ENCODE measurements at regions of chr7 and their contacts with region 1.

Region 1: GRCh38 chr7:24572997-24573625 is at the start of gene PALS2:
- DNase-seq: peak; percentile 71 to 91 (median 82)
- ATAC-seq: peak; percentile 82
- H3K4me3 ChIP-seq: peak within 1 kb of the TSS; percentile 81 to 88
- H3K4me3 Mint-ChIP-seq: peak within 1 kb of the TSS; percentile 94
- H3K27ac ChIP-seq: peak within 1 kb of the TSS; percentile 69 to 77
- H3K27ac Mint-ChIP-seq: peak within 1 kb of the TSS; percentile 92
- H3K4me1 ChIP-seq: peaks cover 31% of the 10 kb centered on the region
- H3K4me1 Mint-ChIP-seq: peaks cover 42% of the 10 kb centered on the region
- H3K27me3 ChIP-seq: no peaks in the 10 kb centered on the region
- H3K27me3 Mint-ChIP-seq: peaks cover 5% of the 10 kb centered on the region
- CTCF ChIP-seq: no peak
- total RNA-seq, gene PALS2: 31.7 to 32.8 TPM

Region 2: GRCh38 chr7:22911889-22912288 is 1661.2 kb before region 1 on chr7:
- CTCF ChIA-PET with region 1: no interaction called
- POLR2A ChIA-PET with region 1: no interaction called
- intact Hi-C with region 1: no loop called
- DNase-seq: no peak
- ATAC-seq: no peak
- H3K4me3 ChIP-seq: no peak overlapping the region
- H3K4me3 Mint-ChIP-seq: no peak overlapping the region
- H3K27ac ChIP-seq: no peak overlapping the region
- H3K27ac Mint-ChIP-seq: no peak overlapping the region
- H3K4me1 ChIP-seq: no peaks in the 10 kb centered on the region
- H3K4me1 Mint-ChIP-seq: no peaks in the 10 kb centered on the region
- H3K27me3 ChIP-seq: no peaks in the 10 kb centered on the region
- H3K27me3 Mint-ChIP-seq: no peaks in the 10 kb centered on the region
- CTCF ChIP-seq: no peak

Region 3: DNA sequence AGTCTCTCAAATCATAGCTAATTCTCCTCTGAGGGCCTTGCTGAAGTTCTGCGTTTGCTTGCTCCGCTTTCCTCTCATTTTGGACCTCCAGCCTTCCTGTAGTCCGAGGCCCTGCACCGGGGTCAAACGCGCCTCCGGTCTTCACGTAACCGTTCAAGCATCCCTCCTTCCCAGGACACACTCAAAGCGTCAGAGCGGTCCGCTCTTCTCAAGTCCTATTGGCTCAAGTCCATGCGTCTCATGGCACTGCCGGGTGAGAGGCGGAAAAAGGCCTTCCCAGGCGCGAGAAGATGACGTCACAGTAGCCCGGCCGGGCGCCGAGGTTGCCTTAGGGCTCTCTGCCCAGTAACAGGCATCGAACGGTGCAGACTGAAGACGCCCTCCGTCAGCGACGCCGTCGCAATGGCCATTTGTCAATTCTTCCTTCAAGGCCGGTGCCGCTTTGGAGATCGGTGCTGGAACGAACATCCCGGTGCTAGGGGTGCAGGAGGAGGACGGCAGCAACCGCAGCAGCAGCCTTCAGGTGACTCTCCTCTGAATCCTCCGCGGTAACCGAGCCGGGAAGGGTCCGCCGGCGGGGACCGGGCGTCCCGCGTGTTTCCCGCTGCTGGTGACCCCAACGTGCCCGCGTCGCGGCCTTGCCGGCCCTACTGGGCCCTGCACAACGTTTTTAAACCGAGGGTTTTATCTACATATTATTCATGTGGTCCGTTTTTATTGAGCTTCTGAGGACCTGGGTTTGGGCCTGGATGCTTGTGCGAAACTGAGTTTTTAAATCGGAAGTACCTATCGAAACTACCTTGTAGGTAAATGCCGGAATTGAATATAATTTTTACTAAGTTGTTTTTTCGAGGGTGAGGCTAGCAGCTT is 1391.2 kb before region 1 on chr7 and contains the start of gene NUP42:
- CTCF ChIA-PET with region 1: no interaction called
- POLR2A ChIA-PET with region 1: no interaction called
- intact Hi-C with region 1: loop called (anchors 10 kb)
- DNase-seq: peak; percentile 89 to 98 (median 95)
- ATAC-seq: peak; percentile 90
- H3K4me3 ChIP-seq: peak within 1 kb of the TSS; percentile 77 to 84
- H3K4me3 Mint-ChIP-seq: peak within 1 kb of the TSS; percentile 100
- H3K27ac ChIP-seq: peak within 1 kb of the TSS; percentile 86 to 91
- H3K27ac Mint-ChIP-seq: peak within 1 kb of the TSS; percentile 100
- H3K4me1 ChIP-seq: peaks cover 30% of the 10 kb centered on the region
- H3K4me1 Mint-ChIP-seq: peaks cover 39% of the 10 kb centered on the region
- H3K27me3 ChIP-seq: no peaks in the 10 kb centered on the region
- H3K27me3 Mint-ChIP-seq: no peaks in the 10 kb centered on the region
- CTCF ChIP-seq: no peak
- total RNA-seq, gene NUP42: 17.3 to 20.4 TPM

Region 4: GRCh38 chr7:23597094-23598091 is 975.7 kb before region 1 on chr7 and contains the start of gene CCDC126:
- CTCF ChIA-PET with region 1: no interaction called
- POLR2A ChIA-PET with region 1: no interaction called
- intact Hi-C with region 1: loop called (anchors 5 kb)
- DNase-seq: peak; percentile 57 to 88 (median 81)
- ATAC-seq: peak; percentile 89
- H3K4me3 ChIP-seq: peak within 1 kb of the TSS; percentile 81 to 91
- H3K4me3 Mint-ChIP-seq: peak within 1 kb of the TSS; percentile 85
- H3K27ac ChIP-seq: peak within 1 kb of the TSS; percentile 55 to 63
- H3K27ac Mint-ChIP-seq: peak within 1 kb of the TSS; percentile 49
- H3K4me1 ChIP-seq: peaks cover 21% of the 10 kb centered on the region
- H3K4me1 Mint-ChIP-seq: peaks cover 34% of the 10 kb centered on the region
- H3K27me3 ChIP-seq: no peaks in the 10 kb centered on the region
- H3K27me3 Mint-ChIP-seq: no peaks in the 10 kb centered on the region
- CTCF ChIP-seq: no peak
- total RNA-seq, gene CCDC126: 10.8 to 11.9 TPM

Region 5: DNA sequence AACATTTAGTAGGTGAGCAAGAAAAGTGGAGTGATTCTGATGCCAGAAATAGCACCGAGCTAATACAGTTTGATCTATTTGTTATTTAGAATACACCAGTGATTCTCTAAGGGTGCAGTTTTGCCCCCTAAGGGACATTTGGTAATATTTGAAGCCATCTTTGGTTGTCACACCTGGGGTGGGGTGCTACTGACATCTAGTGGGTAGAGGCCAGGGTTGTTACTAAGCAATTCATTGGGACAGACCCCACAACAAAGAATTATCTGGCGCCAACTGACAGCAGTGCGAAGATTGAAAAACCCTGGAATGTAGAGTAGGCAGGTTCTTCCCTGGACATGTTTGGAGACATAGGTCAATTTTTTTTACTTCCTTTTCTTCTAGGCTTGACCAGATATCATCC is 14.7 kb after region 1 on chr7:
- CTCF ChIA-PET with region 1: interaction called, 3 read pairs
- POLR2A ChIA-PET with region 1: no interaction called
- intact Hi-C with region 1: loop called in 1 of 2 experiments (anchors 1 kb)
- DNase-seq: peak; percentile 25 to 80 (median 67)
- ATAC-seq: peak; percentile 95
- H3K4me3 ChIP-seq: no peak overlapping the region
- H3K4me3 Mint-ChIP-seq: no peak overlapping the region
- H3K27ac ChIP-seq: no peak overlapping the region
- H3K27ac Mint-ChIP-seq: no peak overlapping the region
- H3K4me1 ChIP-seq: no peaks in the 10 kb centered on the region
- H3K4me1 Mint-ChIP-seq: peaks cover 12% of the 10 kb centered on the region
- H3K27me3 ChIP-seq: no peaks in the 10 kb centered on the region
- H3K27me3 Mint-ChIP-seq: no peaks in the 10 kb centered on the region
- CTCF ChIP-seq: peak; percentile 97

Region 6: DNA sequence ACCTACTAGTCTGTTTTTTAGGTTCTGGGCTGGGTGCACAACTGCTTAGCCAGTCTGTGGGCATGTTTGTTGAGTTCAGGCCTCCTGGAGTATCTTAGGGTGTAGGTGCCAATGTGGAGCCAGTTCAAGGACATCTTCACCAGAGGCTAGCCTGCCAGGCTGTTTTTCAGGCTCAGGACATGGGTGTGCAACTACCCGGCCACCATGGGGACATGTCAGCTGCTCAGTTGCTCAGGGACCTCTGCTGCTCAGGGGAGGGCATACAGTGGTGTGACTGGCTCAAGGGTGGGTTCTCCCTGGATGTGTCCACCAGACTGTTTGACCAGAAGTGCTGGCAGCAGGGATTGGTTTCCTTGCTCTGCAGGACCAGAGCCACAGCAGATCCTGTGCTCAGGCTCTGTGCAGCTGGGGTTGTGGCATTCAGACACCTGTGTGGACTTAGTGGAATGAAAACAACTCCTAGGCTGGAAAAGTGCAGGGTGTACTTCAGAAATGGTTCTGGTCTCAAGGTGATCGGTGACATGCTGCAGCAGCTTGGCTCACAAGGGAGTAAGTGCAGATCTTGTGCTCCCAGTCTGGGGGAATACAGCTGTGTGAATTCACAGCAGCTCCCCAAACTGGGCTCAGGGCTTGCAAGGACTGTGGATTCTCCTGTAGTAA is 45.0 kb after region 1 on chr7:
- CTCF ChIA-PET with region 1: no interaction called
- POLR2A ChIA-PET with region 1: no interaction called
- intact Hi-C with region 1: no loop called
- DNase-seq: no peak
- ATAC-seq: no peak
- H3K4me3 ChIP-seq: no peak overlapping the region
- H3K4me3 Mint-ChIP-seq: no peak overlapping the region
- H3K27ac ChIP-seq: no peak overlapping the region
- H3K27ac Mint-ChIP-seq: no peak overlapping the region
- H3K4me1 ChIP-seq: no peaks in the 10 kb centered on the region
- H3K4me1 Mint-ChIP-seq: peaks cover 15% of the 10 kb centered on the region
- H3K27me3 ChIP-seq: no peaks in the 10 kb centered on the region
- H3K27me3 Mint-ChIP-seq: no peaks in the 10 kb centered on the region
- CTCF ChIP-seq: no peak

Region 7: DNA sequence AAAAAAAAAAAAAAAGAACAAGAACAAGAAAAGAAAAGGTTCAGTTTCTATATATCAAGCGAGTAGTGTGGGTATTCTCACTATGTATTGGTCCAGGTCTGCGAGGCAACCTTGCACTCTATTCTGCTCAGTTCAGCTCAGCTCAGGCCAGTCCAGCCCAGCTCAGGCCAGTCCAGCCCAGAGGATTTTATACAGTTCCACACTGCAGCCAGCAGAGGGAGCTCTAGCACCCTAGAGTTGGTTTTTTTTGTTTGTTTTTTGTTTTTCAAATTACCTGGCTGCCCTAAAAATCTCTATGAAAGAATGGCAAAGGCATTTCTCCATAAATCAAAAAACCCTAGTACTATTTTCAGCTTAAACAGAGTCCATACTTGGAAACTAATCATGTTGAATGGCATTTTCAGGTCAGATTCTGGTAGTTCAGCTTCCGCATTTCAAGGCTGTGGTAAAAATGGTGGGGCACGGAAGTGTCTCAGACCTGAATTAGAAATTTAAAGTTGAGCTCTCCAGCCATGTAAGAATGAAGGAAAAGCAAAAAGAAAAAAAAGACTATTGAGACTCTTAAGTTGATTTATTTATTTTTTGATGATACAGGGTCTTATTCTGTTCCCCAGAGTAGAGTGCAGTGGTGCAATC is 239.3 kb after region 1 on chr7:
- CTCF ChIA-PET with region 1: no interaction called
- POLR2A ChIA-PET with region 1: no interaction called
- intact Hi-C with region 1: no loop called
- DNase-seq: peak in 7 of 9 experiments; percentile 33 to 67 (median 52)
- ATAC-seq: peak; percentile 66
- H3K4me3 ChIP-seq: no peak overlapping the region
- H3K4me3 Mint-ChIP-seq: no peak overlapping the region
- H3K27ac ChIP-seq: no peak overlapping the region
- H3K27ac Mint-ChIP-seq: no peak overlapping the region
- H3K4me1 ChIP-seq: no peaks in the 10 kb centered on the region
- H3K4me1 Mint-ChIP-seq: no peaks in the 10 kb centered on the region
- H3K27me3 ChIP-seq: no peaks in the 10 kb centered on the region
- H3K27me3 Mint-ChIP-seq: no peaks in the 10 kb centered on the region
- CTCF ChIP-seq: peak; percentile 90

Region 8: GRCh38 chr7:24911213-24911603 is 338.1 kb after region 1 on chr7:
- CTCF ChIA-PET with region 1: no interaction called
- POLR2A ChIA-PET with region 1: no interaction called
- intact Hi-C with region 1: loop called in 1 of 2 experiments (anchors 5 kb)
- DNase-seq: peak in 4 of 9 experiments; percentile 32 to 75 (median 48)
- ATAC-seq: peak; percentile 65
- H3K4me3 ChIP-seq: no peak overlapping the region
- H3K4me3 Mint-ChIP-seq: peak overlapping the region; percentile 27
- H3K27ac ChIP-seq: peak overlapping the region in 1 of 2 experiments; percentile 70
- H3K27ac Mint-ChIP-seq: peak overlapping the region; percentile 76
- H3K4me1 ChIP-seq: peaks cover 68% of the 10 kb centered on the region
- H3K4me1 Mint-ChIP-seq: peaks cover 54% of the 10 kb centered on the region
- H3K27me3 ChIP-seq: no peaks in the 10 kb centered on the region
- H3K27me3 Mint-ChIP-seq: no peaks in the 10 kb centered on the region
- CTCF ChIP-seq: no peak

Region 9: DNA sequence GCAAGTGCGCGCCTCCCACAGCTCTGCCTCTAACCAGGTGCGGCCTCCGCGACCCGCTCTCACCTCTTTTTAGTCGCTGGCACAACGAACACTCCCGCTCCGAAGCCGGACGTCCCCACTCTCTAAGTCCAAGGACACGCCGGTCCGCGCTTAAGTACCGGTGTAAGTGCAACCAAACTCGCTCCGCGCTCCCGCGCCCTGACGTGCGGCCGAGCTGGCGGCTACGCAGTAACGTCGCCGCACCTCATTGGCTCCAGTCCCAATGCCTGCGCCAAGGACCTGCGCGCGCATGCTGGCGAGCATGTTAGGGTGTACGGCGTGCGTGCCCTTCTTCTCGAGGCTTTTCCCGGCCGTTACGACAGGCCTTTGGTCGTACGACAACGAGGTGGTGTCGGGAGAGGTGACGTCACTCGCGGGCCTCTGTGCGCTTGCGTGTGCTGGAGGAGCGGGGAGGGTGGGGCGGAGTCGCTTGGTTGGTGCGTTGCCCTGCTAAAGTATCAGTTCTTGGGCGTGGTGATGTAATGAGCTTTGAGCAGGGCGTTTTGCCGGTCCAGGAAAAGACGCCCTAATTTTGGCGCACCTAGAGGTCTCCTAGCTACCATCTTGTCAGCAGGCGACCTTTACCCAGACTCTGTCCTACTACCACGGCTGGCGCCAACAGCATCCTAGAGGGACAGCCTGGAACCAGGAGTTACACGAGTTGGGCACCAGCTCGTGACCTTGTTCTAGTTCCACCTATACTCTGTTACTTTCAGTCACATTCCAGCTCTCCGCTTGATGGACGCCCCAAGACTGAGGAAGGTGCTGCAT is 552.2 kb after region 1 on chr7 and contains the start of gene CYCS:
- CTCF ChIA-PET with region 1: no interaction called
- POLR2A ChIA-PET with region 1: interaction called, 5 read pairs
- intact Hi-C with region 1: loop called (anchors 2 to 10 kb)
- DNase-seq: peak; percentile 99 to 100 (median 99)
- ATAC-seq: peak; percentile 92
- H3K4me3 ChIP-seq: peak within 1 kb of the TSS; percentile 84 to 86
- H3K4me3 Mint-ChIP-seq: peak within 1 kb of the TSS; percentile 97
- H3K27ac ChIP-seq: peak within 1 kb of the TSS; percentile 96 to 97
- H3K27ac Mint-ChIP-seq: peak within 1 kb of the TSS; percentile 99
- H3K4me1 ChIP-seq: peaks cover 12% of the 10 kb centered on the region
- H3K4me1 Mint-ChIP-seq: peaks cover 22% of the 10 kb centered on the region
- H3K27me3 ChIP-seq: no peaks in the 10 kb centered on the region
- H3K27me3 Mint-ChIP-seq: no peaks in the 10 kb centered on the region
- CTCF ChIP-seq: no peak
- total RNA-seq, gene CYCS: 135 to 140 TPM